Activated naive CD4-positive, alpha-beta T cell treated with anti-CD3 and anti-CD28 coated beads for 36 hours (primary cell): ENCODE measurements at regions of chr2 and their contacts with region 1.

Region 1: GRCh38 chr2:26846328-26847306 is 1.3 kb upstream of the DPYSL5 start:
- DNase-seq: peak; percentile 64
- H3K4me3 Mint-ChIP-seq: peak overlapping the region; percentile 21
- H3K27ac Mint-ChIP-seq: no peak overlapping the region
- H3K4me1 Mint-ChIP-seq: peaks cover 15% of the 10 kb centered on the region
- H3K27me3 Mint-ChIP-seq: peaks cover 36% of the 10 kb centered on the region

Region 2: DNA sequence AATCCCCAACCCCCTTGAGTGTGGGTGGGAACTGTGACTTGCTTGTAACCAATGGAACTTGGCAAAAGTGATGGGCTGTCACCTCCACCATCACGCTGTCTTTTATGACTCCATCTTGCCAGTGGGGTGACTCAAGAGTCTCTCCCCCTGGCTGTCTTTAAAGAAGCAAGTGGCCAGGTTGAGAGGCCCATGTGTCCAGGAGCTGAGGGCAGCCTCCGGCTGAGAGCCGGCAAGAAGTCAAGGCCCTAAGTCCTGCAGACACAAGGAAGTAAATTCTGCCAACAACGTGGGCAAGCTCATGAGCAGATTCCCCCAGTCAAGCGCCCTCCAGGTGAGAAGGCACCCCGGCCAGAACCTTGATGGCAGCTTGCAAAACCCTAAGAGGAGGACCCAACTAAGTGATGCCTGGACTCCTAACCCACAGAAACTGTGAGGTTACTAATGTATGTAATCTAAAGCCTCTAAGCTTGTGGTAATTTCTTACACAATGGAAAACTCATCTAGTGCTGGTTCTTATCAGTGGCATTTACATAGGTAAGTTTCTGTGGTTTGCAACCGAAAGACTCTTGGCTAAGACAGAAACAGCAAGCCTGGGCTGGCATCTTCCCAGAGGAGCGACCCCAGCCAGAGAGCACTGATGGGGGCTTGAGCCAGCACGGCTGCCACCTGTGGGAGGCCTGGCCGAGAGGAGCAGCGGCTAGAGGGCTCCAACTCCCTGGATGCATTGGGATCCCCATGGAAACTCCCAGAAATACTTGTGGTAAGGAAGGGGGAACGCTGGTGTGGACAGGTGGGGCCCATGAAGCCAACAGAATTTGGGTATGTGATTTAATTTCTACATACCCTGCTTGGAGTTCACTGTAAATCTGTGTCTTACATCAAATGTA is 254.8 kb before region 1 on chr2:
- CTCF ChIA-PET with region 1: no interaction called
- intact Hi-C with region 1: no loop called
- DNase-seq: no peak
- H3K4me3 Mint-ChIP-seq: no peak overlapping the region
- H3K27ac Mint-ChIP-seq: no peak overlapping the region
- H3K4me1 Mint-ChIP-seq: peaks cover 3% of the 10 kb centered on the region
- H3K27me3 Mint-ChIP-seq: peaks cover 17% of the 10 kb centered on the region

Region 3: DNA sequence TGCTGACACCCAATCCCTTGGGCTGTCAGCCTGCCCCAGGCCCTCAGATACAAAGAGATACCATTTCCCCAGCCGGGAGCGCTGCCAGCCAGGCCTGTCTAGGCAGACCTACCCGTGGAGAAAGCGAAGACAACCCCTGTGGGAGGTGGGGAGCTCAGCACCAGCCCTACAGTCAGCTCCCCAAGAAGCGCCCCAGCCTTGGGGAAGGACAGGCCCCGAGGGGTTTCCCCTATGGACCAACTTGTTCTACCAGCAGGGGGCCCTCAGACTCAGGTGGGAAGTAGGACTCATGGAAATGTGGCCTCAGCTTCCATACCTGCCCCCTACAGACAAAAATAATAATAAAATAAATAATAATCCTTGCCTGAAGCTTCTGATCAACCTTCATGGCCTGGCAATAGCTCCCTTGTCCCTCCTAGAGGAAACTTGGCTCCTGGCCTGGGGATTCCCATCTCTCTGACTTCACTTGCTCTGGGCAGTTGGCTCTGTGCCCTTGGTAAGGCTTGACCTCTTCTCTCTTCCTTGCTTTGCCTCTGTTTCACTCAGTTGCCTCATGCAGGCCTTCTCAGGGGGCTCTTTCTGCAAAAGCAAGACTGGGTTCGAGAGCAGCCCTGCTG is 75.5 kb before region 1 on chr2:
- CTCF ChIA-PET with region 1: interaction called, 11 read pairs
- intact Hi-C with region 1: no loop called
- DNase-seq: peak; percentile 64
- H3K4me3 Mint-ChIP-seq: no peak overlapping the region
- H3K27ac Mint-ChIP-seq: no peak overlapping the region
- H3K4me1 Mint-ChIP-seq: peaks cover 51% of the 10 kb centered on the region
- H3K27me3 Mint-ChIP-seq: no peaks in the 10 kb centered on the region

Region 4: GRCh38 chr2:26861610-26862224 is 15.1 kb after region 1 on chr2:
- CTCF ChIA-PET with region 1: interaction called, 20 read pairs
- intact Hi-C with region 1: no loop called
- DNase-seq: no peak
- H3K4me3 Mint-ChIP-seq: no peak overlapping the region
- H3K27ac Mint-ChIP-seq: no peak overlapping the region
- H3K4me1 Mint-ChIP-seq: no peaks in the 10 kb centered on the region
- H3K27me3 Mint-ChIP-seq: peaks cover 11% of the 10 kb centered on the region

Region 5: DNA sequence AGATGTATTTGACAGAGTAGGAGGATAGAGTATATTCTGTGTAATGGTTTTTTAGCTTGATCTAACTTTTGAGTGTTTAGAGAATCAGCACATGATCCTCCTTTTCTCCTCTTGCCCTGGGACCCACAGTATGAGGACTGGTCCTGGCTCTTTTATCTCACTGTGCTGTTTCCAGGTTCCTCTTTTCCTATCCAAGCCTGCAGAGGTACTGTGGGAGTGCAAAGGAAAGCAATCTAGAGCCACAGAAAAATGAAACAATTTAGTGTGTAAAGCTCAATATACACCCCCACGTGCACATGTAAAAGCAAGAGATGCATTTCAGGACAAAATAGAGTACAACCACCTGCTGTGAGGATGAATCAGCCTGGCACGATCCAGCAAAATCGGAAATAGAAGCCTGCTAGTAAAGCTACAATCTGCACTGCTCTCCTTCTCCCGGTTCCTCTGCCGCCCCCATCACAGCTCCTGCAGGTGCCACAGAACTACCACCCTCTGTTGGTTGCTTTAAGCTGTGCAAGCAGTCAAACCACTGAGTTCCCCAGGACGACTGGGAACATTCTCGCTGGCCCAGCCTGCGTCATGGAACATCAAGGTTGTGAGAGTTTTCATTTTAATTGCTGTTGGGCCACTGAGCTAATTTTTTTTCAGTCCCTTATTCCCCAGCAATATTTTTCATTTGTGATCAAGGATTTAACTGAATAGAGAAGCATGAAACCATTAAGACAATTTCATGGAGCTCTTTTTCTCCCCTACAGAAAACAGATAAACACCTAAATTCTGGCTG is 76.0 kb after region 1 on chr2:
- CTCF ChIA-PET with region 1: interaction called, 43 read pairs
- intact Hi-C with region 1: loop called (anchors 1 kb)
- DNase-seq: peak; percentile 63
- H3K4me3 Mint-ChIP-seq: no peak overlapping the region
- H3K27ac Mint-ChIP-seq: no peak overlapping the region
- H3K4me1 Mint-ChIP-seq: peaks cover 10% of the 10 kb centered on the region
- H3K27me3 Mint-ChIP-seq: peaks cover 12% of the 10 kb centered on the region

Region 6: GRCh38 chr2:27016801-27017325 is 170.2 kb after region 1 on chr2:
- CTCF ChIA-PET with region 1: interaction called, 22 read pairs
- intact Hi-C with region 1: loop called (anchors 5 kb)
- DNase-seq: peak; percentile 70
- H3K4me3 Mint-ChIP-seq: no peak overlapping the region
- H3K27ac Mint-ChIP-seq: no peak overlapping the region
- H3K4me1 Mint-ChIP-seq: no peaks in the 10 kb centered on the region
- H3K27me3 Mint-ChIP-seq: no peaks in the 10 kb centered on the region